CD8-positive, alpha-beta T cell (primary cell): ENCODE measurements at regions of chr17 and their contacts with region 1.

Region 1: GRCh38 chr17:31931756-31932155 is 5.1 kb upstream of the SUZ12 start:
- DNase-seq: peak in 1 of 9 experiments; percentile 5
- ATAC-seq: no peak
- H3K4me3 ChIP-seq: no peak overlapping the region
- H3K4me3 Mint-ChIP-seq: no peak overlapping the region
- H3K27ac ChIP-seq: no peak overlapping the region
- H3K27ac Mint-ChIP-seq: no peak overlapping the region
- H3K4me1 ChIP-seq: no peaks in the 10 kb centered on the region
- H3K4me1 Mint-ChIP-seq: peaks cover 3% of the 10 kb centered on the region
- H3K27me3 ChIP-seq: no peaks in the 10 kb centered on the region
- H3K27me3 Mint-ChIP-seq: no peaks in the 10 kb centered on the region
- CTCF ChIP-seq: no peak

Region 2: DNA sequence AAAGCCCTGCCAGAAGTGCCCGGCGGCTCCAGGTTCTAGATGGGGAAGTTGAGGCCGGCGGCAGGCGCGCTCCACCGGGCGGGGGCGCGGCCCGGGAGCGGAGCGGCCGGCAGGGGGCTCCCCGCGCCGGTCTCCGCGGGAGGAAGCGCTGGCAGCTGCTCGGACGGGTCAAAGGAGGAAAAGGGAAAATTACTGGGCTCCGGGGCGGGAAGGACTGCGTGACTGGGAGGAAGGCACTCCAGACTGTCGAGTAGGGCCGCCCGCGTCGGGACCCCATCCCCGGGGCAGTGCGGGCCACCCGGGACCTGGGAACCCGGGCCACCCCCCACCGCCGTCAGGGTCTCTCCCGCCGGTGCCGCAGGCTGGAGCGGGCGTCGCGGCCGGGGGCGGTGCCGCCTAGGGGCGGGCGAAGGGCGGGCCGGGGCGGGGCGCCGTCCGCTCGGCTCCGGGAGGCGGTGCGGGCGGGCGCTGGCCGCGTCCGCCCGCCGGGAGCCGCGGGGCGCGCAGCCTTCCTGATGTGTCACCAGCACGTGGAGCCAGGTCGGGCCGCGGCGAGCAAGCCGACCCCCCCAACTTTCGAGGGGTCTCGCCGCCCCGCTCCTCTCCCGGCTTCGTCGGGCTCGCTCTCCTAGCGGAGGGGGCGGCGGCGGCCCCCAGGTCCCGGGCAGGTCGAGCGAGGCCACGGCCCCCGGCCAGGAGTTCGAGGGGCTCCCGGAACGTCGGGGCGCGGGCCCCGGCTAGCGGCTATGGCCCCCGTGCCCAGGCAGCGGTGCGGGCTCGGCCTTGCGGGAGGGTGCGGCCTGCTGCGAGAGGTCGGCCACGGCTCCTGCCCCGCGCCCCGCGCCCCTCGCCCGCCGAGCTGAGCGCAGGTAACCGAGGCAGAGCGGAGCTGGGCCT is 372.8 kb before region 1 on chr17:
- CTCF ChIA-PET with region 1: no interaction called
- POLR2A ChIA-PET with region 1: no interaction called
- intact Hi-C with region 1: no loop called
- DNase-seq: peak; percentile 13 to 74 (median 49)
- ATAC-seq: peak; percentile 93
- H3K4me3 ChIP-seq: peak overlapping the region; percentile 51 to 58
- H3K4me3 Mint-ChIP-seq: peak overlapping the region; percentile 70
- H3K27ac ChIP-seq: no peak overlapping the region
- H3K27ac Mint-ChIP-seq: no peak overlapping the region
- H3K4me1 ChIP-seq: peaks cover 6% of the 10 kb centered on the region
- H3K4me1 Mint-ChIP-seq: peaks cover 7% of the 10 kb centered on the region
- H3K27me3 ChIP-seq: peaks cover 0 to 5% of the 10 kb centered on the region in 2 experiments
- H3K27me3 Mint-ChIP-seq: peaks cover 9% of the 10 kb centered on the region
- CTCF ChIP-seq: no peak

Region 3: DNA sequence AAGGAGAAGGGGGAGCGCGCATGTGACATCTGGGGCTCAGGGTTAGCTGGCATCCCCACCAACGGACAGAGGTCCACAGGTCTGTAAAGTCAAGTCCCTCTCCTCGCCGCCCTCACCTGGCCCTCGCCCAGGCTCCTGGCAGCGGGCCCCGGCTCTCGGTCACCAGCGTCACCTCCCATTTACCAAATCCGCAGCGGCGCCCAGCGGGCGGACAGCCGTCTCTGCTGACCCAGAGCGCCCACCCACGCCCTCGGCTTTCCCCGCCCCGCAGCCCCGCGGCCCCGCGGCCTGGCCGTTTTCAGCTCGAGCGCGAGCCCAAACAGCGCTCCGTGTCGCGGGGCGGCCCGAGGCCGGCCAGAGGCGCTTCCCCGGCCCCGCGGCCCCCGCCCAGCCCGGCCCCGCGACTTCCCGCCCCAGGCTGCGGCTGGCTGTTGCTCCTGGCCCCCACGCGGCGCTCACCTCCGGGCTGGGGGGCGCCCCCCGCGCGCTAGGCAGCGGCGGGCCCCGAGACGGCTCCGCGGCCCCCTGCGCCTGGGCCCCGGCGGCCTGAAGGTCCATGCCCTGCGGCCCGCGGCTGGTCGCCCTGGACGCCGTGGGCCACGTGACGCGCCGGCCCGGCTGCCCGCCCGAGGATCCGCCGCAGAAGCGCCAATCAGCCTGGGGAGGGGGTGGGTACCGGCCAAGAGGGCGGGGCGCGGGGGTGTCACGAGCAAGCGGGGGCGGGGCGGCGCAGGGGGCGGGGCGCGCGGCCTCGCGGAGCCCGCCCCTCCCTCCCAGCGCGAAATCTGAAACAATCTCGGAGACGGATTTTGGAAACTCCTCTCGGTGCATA is 72.9 kb before region 1 on chr17 and contains the start of gene COPRS:
- CTCF ChIA-PET with region 1: no interaction called
- POLR2A ChIA-PET with region 1: no interaction called
- intact Hi-C with region 1: loop called in 1 of 2 experiments (anchors 2 kb)
- DNase-seq: peak; percentile 53 to 88 (median 77)
- ATAC-seq: peak; percentile 92
- H3K4me3 ChIP-seq: peak within 1 kb of the TSS; percentile 53 to 69
- H3K4me3 Mint-ChIP-seq: peak within 1 kb of the TSS; percentile 86
- H3K27ac ChIP-seq: no peak within 1 kb of the TSS
- H3K27ac Mint-ChIP-seq: peak within 1 kb of the TSS; percentile 15
- H3K4me1 ChIP-seq: peaks cover 14% of the 10 kb centered on the region
- H3K4me1 Mint-ChIP-seq: peaks cover 16% of the 10 kb centered on the region
- H3K27me3 ChIP-seq: no peaks in the 10 kb centered on the region
- H3K27me3 Mint-ChIP-seq: no peaks in the 10 kb centered on the region
- CTCF ChIP-seq: no peak
- total RNA-seq, gene COPRS: 2.4 to 2.6 TPM

Region 4: DNA sequence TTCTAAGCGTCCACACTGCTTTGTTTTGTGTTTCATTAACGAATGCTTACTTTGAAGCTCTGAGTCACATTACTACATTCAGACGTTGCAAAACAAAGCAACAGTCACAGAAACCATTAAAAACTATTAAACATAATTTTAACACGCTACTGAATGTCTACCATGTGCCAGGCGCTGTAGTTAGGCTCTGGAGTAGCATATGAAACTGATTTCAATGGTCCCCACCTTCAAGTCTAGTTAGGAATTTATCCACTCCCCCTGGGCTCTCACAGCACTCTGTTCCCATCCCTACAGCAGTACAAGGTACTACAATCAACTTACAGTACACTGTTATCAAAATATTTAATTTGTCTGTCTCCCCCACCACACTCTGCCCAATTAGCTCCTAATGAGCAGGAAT is 30.9 kb before region 1 on chr17:
- CTCF ChIA-PET with region 1: interaction called, 3 read pairs
- POLR2A ChIA-PET with region 1: interaction called, 5 read pairs
- intact Hi-C with region 1: loop called (anchors 1 kb)
- DNase-seq: no peak
- ATAC-seq: no peak
- H3K4me3 ChIP-seq: peak overlapping the region; percentile 65 to 72
- H3K4me3 Mint-ChIP-seq: no peak overlapping the region
- H3K27ac ChIP-seq: peak overlapping the region; percentile 57 to 71
- H3K27ac Mint-ChIP-seq: no peak overlapping the region
- H3K4me1 ChIP-seq: peaks cover 10% of the 10 kb centered on the region
- H3K4me1 Mint-ChIP-seq: peaks cover 18% of the 10 kb centered on the region
- H3K27me3 ChIP-seq: no peaks in the 10 kb centered on the region
- H3K27me3 Mint-ChIP-seq: no peaks in the 10 kb centered on the region
- CTCF ChIP-seq: no peak

Region 5: DNA sequence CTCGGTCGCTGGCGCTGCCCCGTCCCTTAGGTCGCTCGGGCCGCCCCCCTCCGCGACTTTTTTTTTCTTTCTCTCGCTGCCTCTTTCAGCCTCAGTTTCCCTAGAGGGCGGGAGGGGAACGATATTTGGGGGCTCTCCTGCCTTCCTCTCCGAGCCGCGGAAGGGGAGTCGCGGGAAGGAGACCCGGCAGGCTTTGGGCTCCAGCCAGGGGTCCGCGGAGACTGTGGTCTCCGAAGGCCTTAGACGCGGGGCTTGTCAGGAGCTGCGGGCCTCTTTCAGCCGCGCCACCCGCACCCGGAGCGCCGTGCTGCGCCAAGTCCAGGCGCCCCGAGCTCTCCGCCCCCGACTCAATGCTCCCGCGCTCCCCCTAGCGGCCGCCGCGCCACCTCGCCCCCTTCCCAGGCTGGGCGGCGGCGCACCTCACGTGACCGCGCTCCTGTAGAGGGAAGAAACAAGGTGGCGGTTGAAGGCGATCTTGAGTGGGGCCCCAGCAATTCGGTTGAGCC is 75.3 kb after region 1 on chr17 and contains the start of gene LRRC37B:
- CTCF ChIA-PET with region 1: no interaction called
- POLR2A ChIA-PET with region 1: no interaction called
- intact Hi-C with region 1: loop called in 1 of 2 experiments (anchors 2 kb)
- DNase-seq: peak; percentile 83 to 95 (median 90)
- ATAC-seq: peak; percentile 87
- H3K4me3 ChIP-seq: peak within 1 kb of the TSS; percentile 87 to 90
- H3K4me3 Mint-ChIP-seq: peak within 1 kb of the TSS; percentile 90
- H3K27ac ChIP-seq: peak within 1 kb of the TSS; percentile 49 to 60
- H3K27ac Mint-ChIP-seq: peak within 1 kb of the TSS; percentile 91
- H3K4me1 ChIP-seq: peaks cover 36% of the 10 kb centered on the region
- H3K4me1 Mint-ChIP-seq: peaks cover 30% of the 10 kb centered on the region
- H3K27me3 ChIP-seq: no peaks in the 10 kb centered on the region
- H3K27me3 Mint-ChIP-seq: no peaks in the 10 kb centered on the region
- CTCF ChIP-seq: peak; percentile 78
- total RNA-seq, gene LRRC37B: 80.1 to 88.3 TPM

Region 6: DNA sequence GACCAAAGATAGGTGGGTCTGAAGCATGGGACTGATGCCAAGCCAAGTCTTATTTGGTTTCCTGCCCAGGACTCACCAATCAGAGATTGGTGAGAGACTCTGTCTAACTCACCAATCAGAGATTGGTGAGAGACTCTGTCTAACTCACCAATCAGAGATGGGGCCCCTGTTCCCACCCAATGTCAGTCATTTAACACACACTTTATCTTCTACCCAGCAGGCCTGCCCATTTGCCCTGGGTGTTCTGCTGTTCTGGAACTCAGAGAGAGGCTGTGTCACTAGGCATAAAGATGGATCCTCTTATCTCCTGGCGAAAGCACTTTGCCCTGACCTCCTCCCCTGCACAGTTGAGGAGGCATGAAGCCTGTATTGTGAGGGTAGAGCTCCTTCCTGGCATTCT is 205.1 kb after region 1 on chr17:
- CTCF ChIA-PET with region 1: interaction called, 3 read pairs
- POLR2A ChIA-PET with region 1: no interaction called
- intact Hi-C with region 1: loop called in 1 of 2 experiments (anchors 5 kb)
- DNase-seq: peak in 3 of 9 experiments; percentile 9 to 50 (median 18)
- ATAC-seq: peak; percentile 62
- H3K4me3 ChIP-seq: no peak overlapping the region
- H3K4me3 Mint-ChIP-seq: no peak overlapping the region
- H3K27ac ChIP-seq: no peak overlapping the region
- H3K27ac Mint-ChIP-seq: no peak overlapping the region
- H3K4me1 ChIP-seq: peaks cover 11% of the 10 kb centered on the region
- H3K4me1 Mint-ChIP-seq: peaks cover 22% of the 10 kb centered on the region
- H3K27me3 ChIP-seq: no peaks in the 10 kb centered on the region
- H3K27me3 Mint-ChIP-seq: no peaks in the 10 kb centered on the region
- CTCF ChIP-seq: no peak